GM10248 (cell line): ENCODE measurements at regions of chr3 and their contacts with region 1.

Region 1: GRCh38 chr3:52123106-52123725 is 31.0 kb downstream of the POC1A start:
- DNase-seq: peak; percentile 88
- CTCF ChIP-seq: peak; percentile 98

Region 2: GRCh38 chr3:52014613-52015012 is 108.6 kb before region 1 on chr3:
- CTCF ChIA-PET with region 1: interaction called, 20 read pairs
- POLR2A ChIA-PET with region 1: no interaction called
- DNase-seq: no peak
- CTCF ChIP-seq: no peak

Region 3: GRCh38 chr3:52088445-52089367 is 34.5 kb before region 1 on chr3:
- CTCF ChIA-PET with region 1: interaction called, 16 read pairs
- POLR2A ChIA-PET with region 1: no interaction called
- DNase-seq: no peak
- CTCF ChIP-seq: no peak

Region 4: GRCh38 chr3:52136513-52136912 is 13.3 kb after region 1 on chr3:
- CTCF ChIA-PET with region 1: interaction called, 36 read pairs
- POLR2A ChIA-PET with region 1: no interaction called
- DNase-seq: no peak
- CTCF ChIP-seq: no peak